HepG2 (cell line): ENCODE measurements at regions of chr16 and their contacts with region 1.

Region 1: GRCh38 chr16:11742539-11743307 is at the start of gene TXNDC11:
- DNase-seq: peak; percentile 98
- ATAC-seq: peak; percentile 88
- H3K4me3 ChIP-seq: peak within 1 kb of the TSS; percentile 75 to 98 (median 97)
- H3K27ac ChIP-seq: peak within 1 kb of the TSS; percentile 94
- H3K4me1 ChIP-seq: peaks cover 84% of the 10 kb centered on the region
- H3K27me3 ChIP-seq: no peaks in the 10 kb centered on the region; a peak in 1 of 5 replicates
- CTCF ChIP-seq: no peak; the same call in 1 of the 2 replicates
- EP300 ChIP-seq: peak in 1 of 2 experiments; percentile 63
- POLR2A ChIP-seq: peak; percentile 96 to 98
- RAD21 ChIP-seq: peak; percentile 89
- total RNA-seq, gene TXNDC11: 46.4 and 74.9 TPM in 2 replicates

Region 2: GRCh38 chr16:11675561-11676511 is 66.9 kb before region 1 on chr16:
- CTCF ChIA-PET with region 1: no interaction called
- POLR2A ChIA-PET with region 1: interaction called, 11 read pairs
- in situ Hi-C with region 1: no loop called
- intact Hi-C with region 1: no loop called
- DNase-seq: peak; percentile 88
- ATAC-seq: peak; percentile 81
- H3K4me3 ChIP-seq: no peak overlapping the region
- H3K27ac ChIP-seq: no peak overlapping the region
- H3K4me1 ChIP-seq: peaks cover 36% of the 10 kb centered on the region
- H3K27me3 ChIP-seq: no peaks in the 10 kb centered on the region
- CTCF ChIP-seq: peak; percentile 57
- EP300 ChIP-seq: peak in 1 of 2 experiments; percentile 15; a peak in 1 of 4 replicates
- POLR2A ChIP-seq: peak; percentile 15 to 51; a peak in 1 of 4 replicates
- RAD21 ChIP-seq: peak; percentile 68; the same call in 1 of the 2 replicates

Region 3: GRCh38 chr16:11727796-11728543 is 14.8 kb before region 1 on chr16:
- CTCF ChIA-PET with region 1: no interaction called
- POLR2A ChIA-PET with region 1: interaction called, 41 read pairs
- in situ Hi-C with region 1: no loop called
- intact Hi-C with region 1: no loop called
- DNase-seq: no peak
- ATAC-seq: no peak
- H3K4me3 ChIP-seq: no peak overlapping the region
- H3K27ac ChIP-seq: no peak overlapping the region
- H3K4me1 ChIP-seq: peaks cover 47% of the 10 kb centered on the region
- H3K27me3 ChIP-seq: no peaks in the 10 kb centered on the region
- CTCF ChIP-seq: no peak
- EP300 ChIP-seq: no peak
- POLR2A ChIP-seq: no peak
- RAD21 ChIP-seq: no peak

Region 4: DNA sequence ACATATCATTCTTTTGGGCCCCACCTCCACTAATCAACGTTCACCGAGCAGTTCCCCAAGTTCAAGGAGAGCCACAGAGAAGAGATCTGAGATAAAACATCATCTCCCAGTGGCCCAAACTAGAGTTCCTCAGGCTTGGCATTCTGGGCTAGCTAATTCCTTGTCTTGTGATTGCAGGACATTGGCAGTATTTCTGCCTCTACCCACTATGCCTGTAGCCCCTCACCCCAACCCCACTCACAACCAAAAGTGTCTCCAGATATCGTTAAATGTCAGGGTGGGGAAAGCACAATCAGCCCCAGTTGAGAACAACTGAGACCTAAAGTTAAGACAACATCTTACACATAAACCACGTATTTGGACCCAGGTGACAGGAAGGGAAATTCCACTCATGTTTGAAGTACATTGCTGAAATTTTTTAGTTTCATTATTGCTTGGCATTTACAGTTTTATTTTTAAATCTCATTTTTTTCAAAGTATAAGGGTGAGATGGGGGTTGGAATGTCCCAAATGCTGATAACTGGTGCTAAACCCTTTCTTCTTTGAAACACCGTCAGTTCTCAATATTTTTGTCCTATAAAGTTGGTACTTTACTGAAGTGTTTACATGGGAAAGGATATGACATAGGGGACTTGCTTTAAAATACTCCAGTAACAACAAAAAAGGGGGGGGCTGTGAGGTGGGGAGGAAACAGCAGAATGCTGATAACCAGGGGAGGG is 40.8 kb after region 1 on chr16:
- CTCF ChIA-PET with region 1: no interaction called
- POLR2A ChIA-PET with region 1: interaction called, 25 read pairs
- in situ Hi-C with region 1: no loop called
- intact Hi-C with region 1: loop called (anchors 2 kb)
- DNase-seq: no peak
- ATAC-seq: no peak
- H3K4me3 ChIP-seq: no peak overlapping the region
- H3K27ac ChIP-seq: peak overlapping the region; percentile 9
- H3K4me1 ChIP-seq: peaks cover 68% of the 10 kb centered on the region
- H3K27me3 ChIP-seq: no peaks in the 10 kb centered on the region
- CTCF ChIP-seq: no peak
- EP300 ChIP-seq: no peak
- POLR2A ChIP-seq: no peak
- RAD21 ChIP-seq: no peak

Region 5: DNA sequence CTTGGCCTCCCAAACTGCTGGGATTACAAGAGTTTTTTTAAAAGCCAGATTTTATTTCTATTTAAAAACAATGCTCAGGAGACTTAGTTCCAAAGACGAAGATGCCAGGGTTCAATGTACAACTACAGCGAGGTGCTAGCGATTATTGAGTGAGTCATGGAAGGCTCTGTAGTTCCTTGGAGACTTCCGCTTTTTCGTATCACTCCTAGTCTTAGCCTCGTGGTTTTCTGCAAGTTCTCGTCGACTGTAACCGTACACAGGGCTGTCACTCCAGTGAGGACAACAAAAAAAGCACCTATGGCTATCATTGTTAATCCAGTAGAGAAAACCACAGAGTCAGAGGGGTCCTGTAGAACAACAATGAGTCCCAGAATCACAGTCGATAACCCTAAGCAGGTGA is 77.1 kb after region 1 on chr16:
- CTCF ChIA-PET with region 1: no interaction called
- POLR2A ChIA-PET with region 1: interaction called, 17 read pairs
- in situ Hi-C with region 1: no loop called
- intact Hi-C with region 1: loop called (anchors 5 kb)
- DNase-seq: no peak
- ATAC-seq: no peak
- H3K4me3 ChIP-seq: no peak overlapping the region
- H3K27ac ChIP-seq: no peak overlapping the region
- H3K4me1 ChIP-seq: peaks cover 43% of the 10 kb centered on the region
- H3K27me3 ChIP-seq: 0 out of 5 replicates have a peak, but pooled peaks cover 0 to 5% of the 10 kb centered on the region in 2 experiments
- CTCF ChIP-seq: no peak
- EP300 ChIP-seq: no peak
- POLR2A ChIP-seq: no peak
- RAD21 ChIP-seq: no peak